Activated CD4-positive, alpha-beta memory T cell treated with anti-CD3 and anti-CD28 coated beads for 36 hours (primary cell): ENCODE measurements at regions of chr20 and their contacts with region 1.

Region 1: DNA sequence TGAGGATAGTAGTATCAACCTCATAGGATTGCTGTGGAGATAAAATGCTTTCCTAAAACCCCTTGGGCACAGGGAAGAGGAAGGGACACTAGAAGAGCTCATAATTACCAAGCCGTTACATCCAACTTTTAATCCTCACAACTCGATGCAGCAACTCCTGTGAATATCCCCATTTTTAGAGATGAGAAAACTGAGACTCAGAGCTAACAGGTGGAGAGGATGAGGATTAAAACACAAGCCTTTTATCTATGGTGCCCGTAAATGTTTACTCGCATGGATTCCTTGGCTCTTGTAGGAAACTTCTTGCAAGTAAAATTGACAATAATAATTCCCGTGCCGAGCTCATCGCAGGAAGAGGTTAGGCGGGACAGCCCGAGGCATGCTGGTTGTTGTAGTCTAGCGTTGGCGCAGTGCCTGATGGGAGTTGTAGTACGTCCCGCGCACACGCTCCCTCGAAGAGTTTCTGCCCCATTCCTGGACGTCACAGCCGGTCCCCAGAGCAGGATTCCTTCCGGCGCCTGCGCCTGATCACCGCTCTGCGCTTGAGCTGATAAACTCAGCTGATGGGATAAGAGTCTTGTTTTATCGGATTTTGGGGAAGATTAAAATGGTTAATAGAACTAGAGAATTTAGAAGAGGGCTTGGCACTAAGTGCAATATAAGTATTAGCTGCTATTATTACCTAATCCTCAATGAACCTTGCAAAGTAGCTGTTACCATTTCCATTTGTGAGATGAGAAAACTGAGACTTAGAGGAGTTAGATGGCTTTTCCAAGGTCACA is 2.8 kb upstream of the UBE2V1 start:
- DNase-seq: peak; percentile 95
- H3K4me3 Mint-ChIP-seq: peak overlapping the region; percentile 77
- H3K27ac Mint-ChIP-seq: peak overlapping the region; percentile 77
- H3K4me1 Mint-ChIP-seq: peaks cover 44% of the 10 kb centered on the region
- H3K27me3 Mint-ChIP-seq: no peaks in the 10 kb centered on the region

Region 2: DNA sequence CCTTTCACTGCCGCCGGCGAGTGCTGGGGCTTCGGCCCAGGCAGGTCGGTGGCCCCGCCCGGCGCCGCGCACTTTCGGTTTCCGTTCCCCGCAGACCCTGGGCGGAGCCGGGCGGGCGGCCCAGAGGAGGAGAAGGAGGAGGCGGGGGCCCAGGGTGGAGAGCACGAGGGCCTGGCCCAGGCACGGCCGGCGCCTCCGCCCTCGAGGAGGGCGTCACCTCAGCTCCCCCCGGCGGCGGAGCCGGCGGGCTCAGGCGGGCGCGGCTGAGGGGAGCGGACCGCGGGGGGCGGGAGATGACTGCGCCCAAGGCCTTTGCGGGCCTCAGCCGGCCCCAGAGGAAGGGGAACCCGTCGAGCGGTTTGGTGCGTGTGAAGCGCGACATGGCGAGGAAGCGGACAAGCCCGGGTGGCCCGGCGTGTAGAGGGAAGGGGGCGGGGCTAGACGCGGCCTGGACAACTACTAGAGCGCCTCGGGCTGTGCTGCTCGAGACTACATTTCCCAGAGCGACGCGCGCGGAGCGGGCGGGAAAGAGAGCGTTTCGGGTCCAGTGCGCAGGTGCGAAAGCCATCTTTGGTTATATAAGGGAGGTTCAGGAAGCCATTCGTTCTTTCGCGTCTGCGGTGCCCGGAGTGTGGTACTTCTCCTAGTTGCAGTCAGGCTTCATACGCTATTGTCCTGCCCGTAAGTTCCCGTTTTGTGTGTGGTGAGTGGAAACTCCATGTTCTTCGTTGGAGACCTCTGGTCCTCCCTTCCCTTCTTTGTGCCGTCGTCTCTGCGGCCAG is 837.6 kb before region 1 on chr20 and contains the start of gene ZNFX1:
- CTCF ChIA-PET with region 1: no interaction called
- POLR2A ChIA-PET with region 1: no interaction called
- intact Hi-C with region 1: loop called (anchors 10 kb)
- DNase-seq: peak; percentile 99
- H3K4me3 Mint-ChIP-seq: peak within 1 kb of the TSS; percentile 99
- H3K27ac Mint-ChIP-seq: peak within 1 kb of the TSS; percentile 99
- H3K4me1 Mint-ChIP-seq: peaks cover 51% of the 10 kb centered on the region
- H3K27me3 Mint-ChIP-seq: peaks cover 2% of the 10 kb centered on the region
- total RNA-seq, gene ZNFX1: 42.5 to 45.3 TPM

Region 3: DNA sequence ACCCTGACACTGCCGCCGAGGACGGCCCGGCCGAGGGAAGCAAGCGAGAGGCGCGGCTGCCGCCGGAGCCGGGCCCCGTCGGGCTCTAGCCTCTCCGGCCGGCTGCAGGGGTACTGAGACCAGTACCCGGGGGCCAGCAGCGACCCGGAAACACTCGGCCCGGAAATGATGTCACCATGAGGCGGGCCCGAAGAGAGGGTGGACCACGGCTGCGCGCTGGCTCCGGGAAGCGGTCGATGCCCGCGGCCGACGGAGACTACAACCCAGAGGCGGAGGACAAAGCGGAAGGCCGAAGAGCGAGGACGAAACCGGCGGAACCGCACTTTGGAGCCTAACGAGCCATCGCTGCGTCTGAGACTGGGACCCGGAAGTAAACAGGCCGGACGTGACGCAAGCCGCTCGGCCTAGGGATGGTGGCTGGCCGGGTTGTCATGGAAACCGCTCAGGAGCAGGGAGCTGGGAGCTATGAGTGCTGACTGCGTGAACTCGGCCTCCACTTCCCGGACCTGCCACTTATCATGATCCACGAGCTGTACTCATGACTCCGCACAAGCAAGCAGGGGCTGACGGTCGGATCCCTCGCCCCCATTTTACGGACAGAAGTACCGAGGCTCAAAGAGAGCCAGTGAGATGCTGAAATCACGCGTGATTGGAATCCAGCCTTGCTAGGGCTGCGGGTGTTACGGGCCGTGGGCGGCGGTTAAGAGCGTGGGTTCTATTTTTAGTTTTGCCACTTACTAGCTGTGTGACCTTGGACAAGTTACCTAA is 200.2 kb before region 1 on chr20 and contains the start of gene SPATA2:
- CTCF ChIA-PET with region 1: no interaction called
- POLR2A ChIA-PET with region 1: no interaction called
- intact Hi-C with region 1: loop called (anchors 1 kb)
- DNase-seq: peak; percentile 94
- H3K4me3 Mint-ChIP-seq: peak within 1 kb of the TSS; percentile 98
- H3K27ac Mint-ChIP-seq: peak within 1 kb of the TSS; percentile 98
- H3K4me1 Mint-ChIP-seq: peaks cover 31% of the 10 kb centered on the region
- H3K27me3 Mint-ChIP-seq: no peaks in the 10 kb centered on the region
- total RNA-seq, gene SPATA2: 7.9 to 8.6 TPM

Region 4: GRCh38 chr20:50054626-50055511 is 60.9 kb before region 1 on chr20:
- CTCF ChIA-PET with region 1: no interaction called
- POLR2A ChIA-PET with region 1: no interaction called
- intact Hi-C with region 1: no loop called
- DNase-seq: no peak
- H3K4me3 Mint-ChIP-seq: no peak overlapping the region
- H3K27ac Mint-ChIP-seq: no peak overlapping the region
- H3K4me1 Mint-ChIP-seq: no peaks in the 10 kb centered on the region
- H3K27me3 Mint-ChIP-seq: peaks cover 6% of the 10 kb centered on the region

Region 5: DNA sequence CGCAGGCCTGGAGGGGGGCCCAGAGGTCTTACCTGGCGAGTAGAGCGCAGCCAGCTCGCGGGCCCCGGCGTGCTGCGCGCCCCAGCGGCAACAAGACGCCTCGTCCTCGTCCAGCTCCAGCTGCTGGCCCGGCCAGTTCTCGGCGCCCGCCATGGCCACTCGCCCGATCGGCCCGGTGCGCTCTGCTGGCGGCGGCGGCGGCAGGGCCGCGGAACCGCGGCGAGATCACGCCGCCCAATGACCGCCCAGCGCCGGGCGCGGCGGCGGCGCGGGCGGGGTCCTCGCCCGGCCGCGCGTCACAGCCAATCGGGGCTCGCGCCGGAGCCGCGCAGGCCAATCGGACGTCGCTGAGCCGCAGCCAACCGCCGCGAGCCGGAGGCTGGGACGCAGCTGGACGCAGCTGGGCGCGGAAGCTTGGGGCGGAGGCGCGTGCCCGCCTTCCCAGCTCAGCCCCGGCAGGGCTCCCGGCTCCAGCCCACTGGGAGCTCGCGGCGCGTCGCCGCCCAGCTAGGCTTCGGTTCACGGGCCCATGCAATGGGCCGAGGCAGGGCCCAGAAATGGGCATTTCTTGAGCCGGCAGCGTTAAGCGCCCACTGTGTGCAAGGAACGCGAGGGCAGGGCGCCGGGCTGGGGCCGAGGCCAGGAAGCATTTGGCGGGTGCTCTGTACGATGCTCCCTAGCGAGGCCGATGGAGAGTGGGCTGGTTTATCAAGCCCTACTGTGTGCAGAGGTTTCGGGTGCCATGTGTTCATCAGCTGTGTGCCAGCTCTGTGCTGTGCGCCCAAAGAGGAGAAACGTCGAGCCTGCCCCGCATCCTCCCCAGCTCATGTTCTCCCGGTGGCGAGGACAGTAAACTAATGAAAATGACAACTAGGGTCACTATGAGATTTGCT is 37.9 kb after region 1 on chr20 and contains the start of gene PEDS1:
- CTCF ChIA-PET with region 1: interaction called, 26 read pairs
- POLR2A ChIA-PET with region 1: interaction called, 18 read pairs
- intact Hi-C with region 1: loop called (anchors 1 kb)
- DNase-seq: peak; percentile 90
- H3K4me3 Mint-ChIP-seq: peak within 1 kb of the TSS; percentile 81
- H3K27ac Mint-ChIP-seq: peak within 1 kb of the TSS; percentile 70
- H3K4me1 Mint-ChIP-seq: peaks cover 43% of the 10 kb centered on the region
- H3K27me3 Mint-ChIP-seq: no peaks in the 10 kb centered on the region
- total RNA-seq, gene PEDS1: 15.0 to 16.9 TPM

Region 6: GRCh38 chr20:50338479-50339391 is 223.0 kb after region 1 on chr20:
- CTCF ChIA-PET with region 1: no interaction called
- POLR2A ChIA-PET with region 1: no interaction called
- intact Hi-C with region 1: loop called (anchors 5 kb)
- DNase-seq: peak; percentile 91
- H3K4me3 Mint-ChIP-seq: peak overlapping the region; percentile 63
- H3K27ac Mint-ChIP-seq: peak overlapping the region; percentile 96
- H3K4me1 Mint-ChIP-seq: peaks cover 37% of the 10 kb centered on the region
- H3K27me3 Mint-ChIP-seq: no peaks in the 10 kb centered on the region

Region 7: DNA sequence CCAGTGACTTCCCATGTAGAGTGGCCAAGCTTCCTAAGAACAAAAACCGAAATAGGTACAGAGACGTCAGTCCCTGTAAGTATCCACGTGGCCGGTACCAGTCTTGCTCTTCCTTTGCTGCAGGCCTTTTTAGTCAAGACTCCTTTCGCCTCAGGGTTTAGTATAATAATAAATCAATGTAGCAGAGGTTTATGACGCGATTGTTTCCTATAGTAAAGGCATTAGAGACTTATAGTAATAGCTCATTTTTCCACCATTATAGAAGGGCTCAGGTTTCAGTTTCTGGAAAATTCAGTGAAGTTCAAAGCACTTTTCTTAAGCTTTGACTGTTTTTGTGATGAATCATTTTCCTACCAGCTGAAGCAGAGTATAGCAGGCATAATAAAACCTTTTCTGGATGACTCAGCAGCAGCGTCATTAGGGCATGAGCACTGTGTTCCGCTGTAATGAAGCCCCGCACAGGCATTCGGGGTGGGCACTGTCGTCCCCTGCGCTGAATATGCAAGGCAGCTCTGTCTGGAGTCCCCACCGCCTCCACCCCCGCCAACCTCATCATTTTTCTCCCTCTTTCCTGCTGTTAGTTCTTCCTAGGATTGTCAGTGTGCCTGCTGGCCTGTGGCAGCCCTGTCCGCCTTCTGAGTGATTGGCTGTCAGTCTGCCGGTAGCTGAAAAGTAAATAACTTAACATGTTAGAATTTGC is 445.7 kb after region 1 on chr20:
- CTCF ChIA-PET with region 1: no interaction called
- POLR2A ChIA-PET with region 1: no interaction called
- intact Hi-C with region 1: loop called (anchors 5 kb)
- DNase-seq: peak; percentile 86
- H3K4me3 Mint-ChIP-seq: peak overlapping the region; percentile 82
- H3K27ac Mint-ChIP-seq: peak overlapping the region; percentile 97
- H3K4me1 Mint-ChIP-seq: peaks cover 88% of the 10 kb centered on the region
- H3K27me3 Mint-ChIP-seq: no peaks in the 10 kb centered on the region